Natural killer cell (primary cell): ENCODE measurements at regions of chr9 and their contacts with region 1.

Region 1: GRCh38 chr9:94860968-94861871 is 134.7 kb downstream of the AOPEP start:
- DNase-seq: peak; percentile 70 to 92
- ATAC-seq: peak; percentile 81 to 94 (median 90)
- H3K4me3 ChIP-seq: no peak overlapping the region
- H3K4me3 Mint-ChIP-seq: peak overlapping the region; percentile 79
- H3K27ac ChIP-seq: peak overlapping the region; percentile 90
- H3K27ac Mint-ChIP-seq: peak overlapping the region; percentile 94 to 96
- H3K4me1 ChIP-seq: peaks cover 29% of the 10 kb centered on the region
- H3K4me1 Mint-ChIP-seq: peaks cover 51 to 55% of the 10 kb centered on the region in 2 donors
- H3K27me3 ChIP-seq: no peaks in the 10 kb centered on the region
- H3K27me3 Mint-ChIP-seq: no peaks in the 10 kb centered on the region
- CTCF ChIP-seq: no peak

Region 2: DNA sequence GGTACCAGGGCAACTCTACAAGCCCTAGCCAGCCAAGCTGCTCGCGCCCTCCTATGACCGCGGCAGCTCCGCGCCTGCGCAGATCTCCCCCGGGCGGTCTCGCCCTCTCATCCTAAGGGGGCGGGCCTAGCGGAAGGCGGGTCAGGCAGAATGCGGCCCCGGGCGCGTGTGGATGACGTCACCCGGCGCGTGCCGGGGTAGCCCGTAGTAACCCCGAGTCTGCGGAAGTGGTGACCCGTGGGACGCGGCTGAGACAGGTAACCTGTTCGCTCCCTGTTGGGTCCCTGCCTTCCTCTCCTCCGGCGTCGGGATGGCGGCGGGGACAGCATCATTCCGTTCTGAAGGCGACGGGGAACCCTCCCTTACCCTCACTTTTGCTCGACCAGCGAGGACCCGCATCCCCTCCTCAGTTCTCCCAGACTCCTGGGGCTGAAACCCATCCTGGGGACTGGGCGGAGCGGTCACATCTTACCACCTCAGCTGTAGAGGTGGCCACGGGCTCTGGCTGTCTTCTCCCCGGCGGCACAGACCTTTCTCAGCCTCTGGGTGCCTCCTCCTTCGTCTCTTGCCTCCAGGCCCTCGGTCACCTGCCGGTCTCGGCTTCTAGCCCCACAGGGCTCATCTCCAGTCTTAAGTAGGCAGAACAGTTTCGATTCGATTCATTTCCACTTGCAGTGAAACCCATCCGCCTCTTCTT is 134.6 kb before region 1 on chr9 and contains the start of gene AOPEP:
- intact Hi-C with region 1: loop called (anchors 1 kb)
- DNase-seq: peak; percentile 99 to 100
- ATAC-seq: peak; percentile 95 to 99 (median 98)
- H3K4me3 ChIP-seq: peak within 1 kb of the TSS; percentile 93
- H3K4me3 Mint-ChIP-seq: peak within 1 kb of the TSS; percentile 96
- H3K27ac ChIP-seq: peak within 1 kb of the TSS; percentile 95
- H3K27ac Mint-ChIP-seq: peak within 1 kb of the TSS; percentile 95 to 99
- H3K4me1 ChIP-seq: peaks cover 11% of the 10 kb centered on the region
- H3K4me1 Mint-ChIP-seq: peaks cover 10 to 18% of the 10 kb centered on the region in 2 donors
- H3K27me3 ChIP-seq: no peaks in the 10 kb centered on the region
- H3K27me3 Mint-ChIP-seq: no peaks in the 10 kb centered on the region
- CTCF ChIP-seq: no peak
- total RNA-seq, gene AOPEP: 20.1 to 22.6 (median 20.6) TPM

Region 3: GRCh38 chr9:94827584-94828304 is 33.5 kb before region 1 on chr9:
- intact Hi-C with region 1: loop called (anchors 5 kb)
- DNase-seq: no peak
- ATAC-seq: no peak
- H3K4me3 ChIP-seq: no peak overlapping the region
- H3K4me3 Mint-ChIP-seq: no peak overlapping the region
- H3K27ac ChIP-seq: no peak overlapping the region
- H3K27ac Mint-ChIP-seq: peak overlapping the region in 1 of 2 donors; percentile 32
- H3K4me1 ChIP-seq: no peaks in the 10 kb centered on the region
- H3K4me1 Mint-ChIP-seq: peaks cover 33 to 41% of the 10 kb centered on the region in 2 donors
- H3K27me3 ChIP-seq: no peaks in the 10 kb centered on the region
- H3K27me3 Mint-ChIP-seq: no peaks in the 10 kb centered on the region
- CTCF ChIP-seq: no peak

Region 4: DNA sequence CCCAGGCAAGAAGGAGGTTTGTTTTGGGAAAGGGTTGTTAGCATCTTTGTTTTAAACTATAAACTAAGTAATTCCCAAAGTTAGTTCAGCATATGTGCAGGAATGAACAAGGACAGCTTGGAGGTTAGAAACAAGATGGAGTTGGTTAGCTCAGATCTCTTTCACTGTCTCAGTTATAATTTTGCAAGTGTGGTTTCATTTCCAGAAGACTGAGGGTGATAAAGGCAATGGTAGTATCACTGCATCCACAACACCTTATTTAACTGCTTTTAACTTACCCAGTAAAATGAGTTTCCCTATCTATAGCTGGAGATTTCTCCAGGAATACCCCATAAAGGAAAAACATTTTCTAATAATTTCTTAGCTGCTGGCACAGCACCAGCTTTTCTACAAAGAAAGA is 18.0 kb after region 1 on chr9:
- intact Hi-C with region 1: loop called (anchors 2 kb)
- DNase-seq: no peak
- ATAC-seq: no peak
- H3K4me3 ChIP-seq: no peak overlapping the region
- H3K4me3 Mint-ChIP-seq: peak overlapping the region; percentile 40
- H3K27ac ChIP-seq: no peak overlapping the region
- H3K27ac Mint-ChIP-seq: peak overlapping the region; percentile 65 to 79
- H3K4me1 ChIP-seq: peaks cover 4% of the 10 kb centered on the region
- H3K4me1 Mint-ChIP-seq: peaks cover 24 to 32% of the 10 kb centered on the region in 2 donors
- H3K27me3 ChIP-seq: no peaks in the 10 kb centered on the region
- H3K27me3 Mint-ChIP-seq: no peaks in the 10 kb centered on the region
- CTCF ChIP-seq: no peak

Region 5: DNA sequence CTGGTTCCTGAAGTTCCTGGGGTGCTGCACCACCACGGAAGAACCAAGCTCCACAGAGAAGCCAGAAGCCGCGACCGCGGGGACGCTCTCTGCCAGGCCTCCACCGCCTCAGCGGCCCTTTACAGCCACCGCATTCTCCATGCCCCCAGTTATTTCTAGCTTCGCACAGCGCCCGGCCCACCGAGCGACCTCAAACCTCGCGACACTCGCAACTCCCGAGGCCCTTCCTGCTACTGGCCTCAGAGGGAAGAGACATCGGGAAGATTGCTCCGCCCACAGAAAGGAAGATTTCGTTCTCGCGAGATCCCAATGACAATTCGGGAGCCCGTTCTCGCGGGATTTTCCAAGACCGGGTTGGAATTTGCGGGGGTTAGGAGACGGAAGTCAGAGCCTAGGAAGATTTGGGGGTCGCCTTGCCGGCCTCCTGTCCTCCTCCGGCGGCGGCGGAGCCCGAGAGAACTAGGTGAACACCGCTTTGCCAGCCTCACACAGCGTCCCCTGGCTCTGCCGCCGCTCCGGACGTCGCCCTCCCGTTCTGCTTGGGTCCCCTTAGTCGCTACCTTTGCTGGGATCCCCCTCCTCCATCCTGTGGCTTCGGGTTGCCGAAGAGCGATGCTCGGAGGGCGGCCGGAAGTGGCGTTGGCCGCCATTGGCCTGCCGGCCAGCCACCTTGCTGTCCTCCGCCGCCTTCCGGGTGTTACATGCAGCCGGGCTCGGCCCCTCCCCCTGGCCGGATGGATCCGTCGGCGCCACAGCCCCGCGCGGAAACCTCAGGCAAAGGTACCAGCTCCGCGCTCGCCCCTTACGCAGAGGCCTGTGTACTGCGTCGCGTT is 1014.3 kb after region 1 on chr9 and contains the start of gene ERCC6L2:
- intact Hi-C with region 1: loop called (anchors 5 kb)
- DNase-seq: peak; percentile 92 to 97
- ATAC-seq: peak; percentile 85 to 93 (median 89)
- H3K4me3 ChIP-seq: peak within 1 kb of the TSS; percentile 95
- H3K4me3 Mint-ChIP-seq: no peak within 1 kb of the TSS
- H3K27ac ChIP-seq: no peak within 1 kb of the TSS
- H3K27ac Mint-ChIP-seq: no peak within 1 kb of the TSS
- H3K4me1 ChIP-seq: peaks cover 20% of the 10 kb centered on the region
- H3K4me1 Mint-ChIP-seq: peaks cover 9 to 16% of the 10 kb centered on the region in 2 donors
- H3K27me3 ChIP-seq: no peaks in the 10 kb centered on the region
- H3K27me3 Mint-ChIP-seq: no peaks in the 10 kb centered on the region
- CTCF ChIP-seq: no peak
- total RNA-seq, gene ERCC6L2: 37.1 to 45.8 (median 38.6) TPM